ENCODE measurements at regions of chr16 and their contacts with region 1.

Region 1: GRCh38 chr16:77660311-77660710 is 62.0 kb upstream of the NUDT7 start:
- DNase-seq: peak; percentile 11
- H3K4me3 ChIP-seq: no peak overlapping the region
- H3K27ac ChIP-seq: no peak overlapping the region
- H3K27me3 ChIP-seq: no peaks in the 10 kb centered on the region
- CTCF ChIP-seq: peak; percentile 78

Region 2: DNA sequence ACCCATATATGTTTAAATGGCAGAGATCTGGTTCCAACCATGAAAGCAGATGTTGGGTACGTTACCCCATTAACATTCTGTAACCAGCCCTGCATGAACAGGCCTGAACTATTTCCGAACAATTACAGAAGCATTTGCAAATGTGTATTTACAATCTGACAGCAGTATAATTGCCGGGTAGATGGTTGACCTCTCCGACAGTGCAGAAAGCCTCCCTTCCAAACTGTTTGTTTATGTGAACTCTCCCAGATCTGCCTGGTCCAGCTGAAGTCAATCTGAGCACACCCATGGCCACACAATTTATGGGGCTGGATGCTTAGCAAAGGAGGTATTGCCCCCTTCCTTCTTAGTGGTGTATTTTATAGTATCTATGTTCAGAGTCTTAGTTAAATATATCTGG is 83.8 kb after region 1 on chr16:
- CTCF ChIA-PET with region 1: no interaction called
- POLR2A ChIA-PET with region 1: no interaction called
- DNase-seq: peak; percentile 44
- H3K4me3 ChIP-seq: no peak overlapping the region
- H3K27ac ChIP-seq: peak overlapping the region; percentile 61
- H3K27me3 ChIP-seq: peaks cover 3% of the 10 kb centered on the region
- CTCF ChIP-seq: no peak

Region 3: DNA sequence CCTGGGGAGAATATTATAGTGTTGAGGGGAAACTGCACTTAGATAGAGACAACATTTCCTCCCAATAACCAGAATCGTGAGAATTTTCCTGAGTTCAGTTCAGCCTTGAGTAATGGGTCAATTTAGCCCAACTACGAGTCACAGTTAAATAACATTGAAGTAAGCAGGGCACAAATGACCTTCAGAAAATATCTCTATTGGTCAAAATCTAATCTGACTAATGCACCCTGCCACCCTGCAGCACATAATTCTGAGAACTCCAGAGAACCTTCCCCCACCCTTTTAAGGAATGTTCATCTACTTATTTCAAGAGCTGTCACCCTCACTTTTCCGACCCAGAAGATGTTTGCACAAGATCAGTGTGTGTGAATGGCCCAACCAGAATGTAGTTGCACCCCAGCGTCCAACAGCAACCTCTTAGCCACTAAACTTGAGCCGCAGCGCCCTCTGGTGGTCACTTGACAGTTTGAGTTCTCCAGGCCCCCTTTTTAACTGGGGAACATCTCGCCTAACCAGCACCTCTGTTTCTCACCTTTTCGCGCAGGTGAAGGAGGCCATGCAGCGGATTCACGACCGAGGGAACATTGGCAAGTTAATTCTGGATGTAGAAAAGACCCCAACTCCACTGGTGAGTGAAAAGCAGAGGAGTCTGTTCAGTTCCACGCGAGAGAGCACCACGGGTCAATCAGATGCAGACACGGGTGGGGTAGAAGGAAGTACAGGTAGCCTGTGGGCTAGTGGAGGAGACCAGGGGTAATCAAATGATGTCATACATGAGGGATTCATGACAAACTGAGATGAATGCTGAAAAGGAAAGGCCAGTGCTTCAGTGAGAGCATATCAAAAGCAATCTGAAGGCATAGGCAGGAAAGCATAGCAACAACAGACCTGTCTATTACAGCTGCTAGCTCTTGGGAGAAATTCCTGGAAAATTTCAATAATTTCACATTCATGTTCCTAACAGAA is 311.3 kb after region 1 on chr16:
- CTCF ChIA-PET with region 1: interaction called, 11 read pairs
- POLR2A ChIA-PET with region 1: no interaction called
- DNase-seq: peak; percentile 59
- H3K4me3 ChIP-seq: no peak overlapping the region
- H3K27ac ChIP-seq: peak overlapping the region; percentile 21
- H3K27me3 ChIP-seq: no peaks in the 10 kb centered on the region
- CTCF ChIP-seq: peak; percentile 86